GM13977 (cell line): ENCODE measurements at regions of chr2 and their contacts with region 1.

Region 1: GRCh38 chr2:217785544-217786045 is 217.2 kb downstream of the TNS1 start:
- DNase-seq: peak; percentile 88
- CTCF ChIP-seq: peak; percentile 97

Region 2: DNA sequence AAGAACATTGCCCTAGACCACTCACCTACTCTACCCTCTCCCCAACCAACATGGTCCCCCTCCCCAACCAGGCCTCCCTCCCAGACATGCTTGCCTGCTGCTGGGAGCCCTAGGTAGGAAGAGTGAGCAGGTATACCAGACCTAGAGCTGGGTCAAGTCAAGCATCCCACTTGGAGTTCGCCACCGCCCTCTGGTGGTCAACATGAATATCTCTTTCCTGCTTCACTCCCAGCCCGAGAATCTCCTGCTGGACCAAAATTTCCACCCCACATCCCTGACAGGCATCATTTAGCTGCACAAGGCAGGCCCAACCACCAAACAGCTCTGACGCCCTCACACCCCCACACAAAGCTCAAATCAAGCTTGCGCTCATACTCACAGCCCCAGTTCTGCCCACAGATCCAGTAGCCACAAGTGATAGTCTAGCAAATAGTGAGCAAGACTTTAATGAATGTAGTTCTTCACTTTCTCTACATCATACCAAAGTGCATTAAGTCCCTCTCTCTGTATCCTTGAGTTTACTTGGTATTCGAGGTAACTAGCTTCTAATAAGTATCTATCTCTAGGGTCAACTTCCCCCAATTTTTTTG is 101.2 kb after region 1 on chr2:
- in situ Hi-C with region 1: loop called (anchors 5 kb)
- DNase-seq: peak; percentile 84
- CTCF ChIP-seq: peak; percentile 72

Region 3: GRCh38 chr2:217988014-217988839 is 202.6 kb after region 1 on chr2:
- in situ Hi-C with region 1: loop called (anchors 10 kb)
- DNase-seq: peak; percentile 81
- CTCF ChIP-seq: peak; percentile 84